Sigmoid colon (tissue), 7 donors: ENCODE measurements at regions of chr17 and their contacts with region 1.

Region 1: DNA sequence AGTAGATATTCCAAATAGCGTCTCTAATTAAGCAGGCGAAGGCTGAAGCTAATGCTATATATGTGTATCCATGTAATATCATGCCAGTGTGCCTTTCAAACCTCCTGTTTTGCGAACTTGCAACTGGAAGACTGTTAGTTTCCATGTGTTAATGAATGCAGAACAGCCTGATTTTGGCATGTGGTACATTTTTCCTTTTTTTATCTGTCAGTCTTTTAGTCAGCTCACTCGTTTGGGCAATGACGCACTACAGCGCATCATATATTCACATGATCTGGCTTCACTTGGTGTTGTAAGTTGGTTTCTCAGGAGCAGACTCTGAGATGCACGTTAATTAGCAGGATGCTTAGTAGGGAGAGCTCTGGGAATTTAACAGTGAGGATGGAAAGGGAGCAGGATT is 210.4 kb upstream of the CA10 start:
- DNase-seq: no peak
- H3K4me3 ChIP-seq: no peak overlapping the region
- H3K27ac ChIP-seq: no peak overlapping the region
- H3K4me1 ChIP-seq: no peaks in the 10 kb centered on the region
- H3K27me3 ChIP-seq: no peaks in the 10 kb centered on the region
- CTCF ChIP-seq: no peak
- EP300 ChIP-seq: no peak
- POLR2A ChIP-seq: no peak

Region 2: GRCh38 chr17:52306314-52306713 is 62.6 kb before region 1 on chr17:
- intact Hi-C with region 1: loop called (anchors 10 kb)
- DNase-seq: no peak
- H3K4me3 ChIP-seq: no peak overlapping the region
- H3K27ac ChIP-seq: no peak overlapping the region
- H3K4me1 ChIP-seq: no peaks in the 10 kb centered on the region
- H3K27me3 ChIP-seq: no peaks in the 10 kb centered on the region
- CTCF ChIP-seq: no peak
- EP300 ChIP-seq: no peak
- POLR2A ChIP-seq: no peak